Prostate gland (tissue), 2 donors: ENCODE measurements at regions of chr7 and their contacts with region 1.

Region 1: DNA sequence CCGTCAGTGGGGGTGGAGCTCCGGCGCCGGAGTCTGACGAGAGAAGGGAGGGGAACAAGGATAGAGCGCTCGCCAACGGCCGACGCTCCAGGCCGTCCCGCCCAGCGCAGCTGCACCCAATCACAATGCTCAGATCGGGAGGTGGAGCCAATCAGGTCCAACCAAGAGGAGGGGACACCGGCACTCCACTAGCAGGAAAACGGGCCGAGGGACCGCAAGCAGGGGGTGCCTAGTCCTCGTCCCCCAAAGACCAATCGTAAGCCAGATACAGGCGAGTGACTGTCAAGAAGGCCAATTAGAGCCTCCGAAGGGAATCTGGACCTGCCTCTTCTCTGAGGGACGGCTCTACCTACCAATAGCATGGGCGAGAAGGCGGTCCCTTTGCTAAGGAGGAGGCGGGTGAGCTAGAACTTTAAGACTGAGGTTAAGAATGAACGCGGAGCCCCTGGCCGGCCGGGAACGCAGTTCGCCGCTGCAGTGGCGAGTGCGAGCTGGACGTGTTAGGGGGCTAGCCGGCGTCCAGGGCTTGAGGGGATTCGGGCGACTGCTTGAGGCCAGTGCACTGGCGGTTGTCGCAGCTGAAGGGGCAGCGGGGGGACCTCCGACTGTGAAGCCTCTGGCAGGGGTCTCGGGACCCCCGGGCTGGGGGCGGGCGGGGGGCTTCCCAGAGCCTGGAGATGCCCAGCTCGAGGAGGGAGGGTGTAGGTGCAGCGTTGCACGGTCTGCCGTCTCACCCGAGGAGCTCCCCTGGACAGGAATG is at the start of gene FBXO24:
- DNase-seq: peak; percentile 100
- H3K4me3 ChIP-seq: peak within 1 kb of the TSS; percentile 76 to 98
- H3K27ac ChIP-seq: peak within 1 kb of the TSS; percentile 96 to 99
- H3K4me1 ChIP-seq: peaks cover 32% of the 10 kb centered on the region
- H3K27me3 ChIP-seq: no peaks in the 10 kb centered on the region
- CTCF ChIP-seq: no peak
- POLR2A ChIP-seq: peak; percentile 46
- total RNA-seq, gene FBXO24: 2.3 to 9.7 TPM

Region 2: GRCh38 chr7:100538654-100539435 is 47.6 kb before region 1 on chr7 and contains the start of gene AGFG2:
- intact Hi-C with region 1: loop called (anchors 5 kb)
- DNase-seq: peak; percentile 100
- H3K4me3 ChIP-seq: peak within 1 kb of the TSS; percentile 85 to 87
- H3K27ac ChIP-seq: peak within 1 kb of the TSS; percentile 74 to 75
- H3K4me1 ChIP-seq: peaks cover 8% of the 10 kb centered on the region
- H3K27me3 ChIP-seq: no peaks in the 10 kb centered on the region
- CTCF ChIP-seq: peak in 1 of 4 experiments; percentile 24
- POLR2A ChIP-seq: peak; percentile 97
- total RNA-seq, gene AGFG2: 33.0 to 94.9 TPM

Region 3: DNA sequence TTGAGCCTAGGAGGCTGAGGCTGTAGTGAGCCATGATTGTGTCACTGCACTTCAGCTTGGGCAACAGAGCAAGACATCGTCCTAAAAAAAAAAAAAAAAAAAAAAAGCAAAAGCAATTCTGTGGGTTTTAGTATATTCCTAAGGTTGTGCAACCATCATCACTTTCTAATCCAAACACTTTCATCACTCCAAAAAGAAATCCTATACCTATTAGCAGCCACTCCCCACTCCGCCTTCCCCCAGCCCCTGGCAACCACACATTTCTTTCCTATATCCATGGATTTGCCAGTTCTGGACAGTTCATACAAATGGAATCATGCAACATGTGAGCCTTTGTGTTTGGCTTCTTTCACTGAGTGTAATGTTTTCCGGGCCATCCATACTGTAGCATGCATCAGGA is 167.3 kb after region 1 on chr7:
- intact Hi-C with region 1: no loop called
- DNase-seq: no peak
- H3K4me3 ChIP-seq: no peak overlapping the region
- H3K27ac ChIP-seq: no peak overlapping the region
- H3K4me1 ChIP-seq: no peaks in the 10 kb centered on the region
- H3K27me3 ChIP-seq: no peaks in the 10 kb centered on the region
- CTCF ChIP-seq: no peak
- POLR2A ChIP-seq: no peak